ENCODE measurements at regions of chr1 and their contacts with region 1.

Region 1: DNA sequence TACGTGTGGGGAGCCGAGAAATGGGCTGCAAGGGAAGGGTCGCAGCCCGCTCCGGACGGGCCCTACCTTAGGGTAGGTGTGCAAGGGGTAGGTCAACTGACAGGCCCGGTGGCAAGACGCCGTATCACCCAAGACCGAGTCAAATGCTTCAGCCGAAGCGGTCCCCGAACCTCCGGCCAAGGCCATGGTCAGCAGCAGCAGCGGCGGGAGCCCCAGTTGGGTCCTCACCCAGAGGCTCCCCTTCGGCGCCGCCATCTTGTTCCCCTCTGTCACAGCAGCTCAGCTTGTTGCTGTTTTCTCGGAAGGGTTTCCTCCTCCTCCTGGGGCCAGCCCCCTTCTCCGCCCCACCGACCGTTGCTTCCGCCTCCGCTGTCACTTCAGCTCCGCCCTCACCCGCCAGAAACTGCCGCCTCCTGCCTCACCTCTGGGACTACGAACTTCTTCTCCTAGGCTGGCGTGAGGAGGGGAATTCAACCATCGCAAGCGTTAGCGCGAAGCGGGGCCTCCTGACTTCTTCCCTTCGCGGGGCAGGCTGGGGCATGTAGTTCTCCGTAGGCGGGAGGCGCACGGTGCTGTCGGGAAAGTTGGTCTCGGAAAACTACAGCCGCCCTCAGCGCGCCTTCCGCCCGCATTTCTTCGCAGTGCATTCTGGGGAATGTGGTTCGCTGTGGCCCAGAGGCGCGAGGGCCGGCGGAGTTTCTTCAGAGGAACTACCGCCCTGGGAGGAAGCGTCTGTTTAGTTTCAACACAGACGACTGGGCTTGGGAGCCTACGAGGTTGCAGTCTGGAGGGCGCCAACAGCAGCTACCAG is at the starts of genes TCEANC2 and TMEM59:
- DNase-seq: peak; percentile 98
- H3K4me3 Mint-ChIP-seq: no peak within 1 kb of the TSS
- H3K27ac Mint-ChIP-seq: no peak within 1 kb of the TSS
- H3K4me1 Mint-ChIP-seq: peaks cover 18% of the 10 kb centered on the region
- H3K27me3 Mint-ChIP-seq: no peaks in the 10 kb centered on the region
- total RNA-seq, gene TCEANC2: 12.8 and 13.2 TPM in 2 replicates
- total RNA-seq, gene TMEM59: 128 and 133 TPM in 2 replicates

Region 2: GRCh38 chr1:53196485-53197270 is 856.5 kb before region 1 on chr1 and contains the start of gene CPT2:
- intact Hi-C with region 1: loop called (anchors 10 kb)
- DNase-seq: peak; percentile 90
- H3K4me3 Mint-ChIP-seq: peak within 1 kb of the TSS; percentile 89
- H3K27ac Mint-ChIP-seq: peak within 1 kb of the TSS; percentile 90
- H3K4me1 Mint-ChIP-seq: peaks cover 22% of the 10 kb centered on the region
- H3K27me3 Mint-ChIP-seq: no peaks in the 10 kb centered on the region
- total RNA-seq, gene CPT2: 23.3 and 25.3 TPM in 2 replicates

Region 3: DNA sequence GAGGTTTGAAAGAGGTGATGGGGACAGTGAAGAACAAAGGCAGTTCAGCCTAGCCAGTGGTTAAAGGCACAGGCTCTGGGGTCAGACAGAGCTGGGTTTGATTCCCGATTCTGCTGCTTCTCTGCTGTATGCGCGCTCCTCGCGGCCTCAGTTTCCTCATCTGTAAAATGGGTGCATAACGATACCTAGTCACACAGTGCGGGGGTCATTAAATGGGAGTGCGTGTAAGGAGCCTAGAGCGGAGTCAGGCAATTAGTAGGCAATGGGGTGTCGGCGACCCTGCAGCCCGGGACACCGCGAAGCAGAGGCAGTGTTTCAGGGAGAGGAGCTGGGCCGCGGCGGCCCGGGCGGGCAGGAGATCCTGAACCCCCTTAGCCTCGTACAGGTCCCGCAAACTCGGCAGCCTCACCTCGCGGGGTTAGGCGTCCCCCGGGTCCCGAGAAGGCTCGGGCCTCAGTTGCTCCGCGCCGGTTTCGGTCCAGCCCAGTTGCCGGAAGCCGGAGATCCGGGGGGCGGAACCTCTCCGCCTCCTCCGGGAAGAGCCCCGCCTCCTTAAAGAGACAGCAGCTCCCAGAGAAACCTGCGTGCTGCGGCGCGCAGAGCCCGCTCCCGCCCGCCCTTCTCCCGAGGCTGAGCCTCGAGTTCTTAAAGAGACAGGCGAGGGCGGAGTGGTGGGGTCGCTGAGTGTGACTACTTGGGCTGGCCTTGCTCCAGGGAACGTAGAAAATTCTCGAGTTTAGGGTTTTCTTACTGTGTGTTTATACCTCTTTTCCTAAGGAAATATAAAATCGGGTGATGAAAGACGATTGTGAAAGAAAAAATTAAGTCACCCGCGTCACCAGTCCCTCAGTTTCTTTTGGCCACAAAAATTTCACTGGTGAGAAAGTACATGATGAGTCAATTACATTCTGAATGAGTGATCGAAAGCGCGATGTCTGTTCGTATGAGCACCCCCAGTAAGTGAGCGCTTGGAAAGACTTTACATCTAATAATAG is 163.5 kb before region 1 on chr1 and contains the start of gene YIPF1:
- intact Hi-C with region 1: loop called (anchors 2 kb)
- DNase-seq: peak; percentile 85
- H3K4me3 Mint-ChIP-seq: peak within 1 kb of the TSS; percentile 99
- H3K27ac Mint-ChIP-seq: peak within 1 kb of the TSS; percentile 95
- H3K4me1 Mint-ChIP-seq: peaks cover 19% of the 10 kb centered on the region
- H3K27me3 Mint-ChIP-seq: no peaks in the 10 kb centered on the region
- total RNA-seq, gene YIPF1: 14.8 and 15.6 TPM in 2 replicates

Region 4: DNA sequence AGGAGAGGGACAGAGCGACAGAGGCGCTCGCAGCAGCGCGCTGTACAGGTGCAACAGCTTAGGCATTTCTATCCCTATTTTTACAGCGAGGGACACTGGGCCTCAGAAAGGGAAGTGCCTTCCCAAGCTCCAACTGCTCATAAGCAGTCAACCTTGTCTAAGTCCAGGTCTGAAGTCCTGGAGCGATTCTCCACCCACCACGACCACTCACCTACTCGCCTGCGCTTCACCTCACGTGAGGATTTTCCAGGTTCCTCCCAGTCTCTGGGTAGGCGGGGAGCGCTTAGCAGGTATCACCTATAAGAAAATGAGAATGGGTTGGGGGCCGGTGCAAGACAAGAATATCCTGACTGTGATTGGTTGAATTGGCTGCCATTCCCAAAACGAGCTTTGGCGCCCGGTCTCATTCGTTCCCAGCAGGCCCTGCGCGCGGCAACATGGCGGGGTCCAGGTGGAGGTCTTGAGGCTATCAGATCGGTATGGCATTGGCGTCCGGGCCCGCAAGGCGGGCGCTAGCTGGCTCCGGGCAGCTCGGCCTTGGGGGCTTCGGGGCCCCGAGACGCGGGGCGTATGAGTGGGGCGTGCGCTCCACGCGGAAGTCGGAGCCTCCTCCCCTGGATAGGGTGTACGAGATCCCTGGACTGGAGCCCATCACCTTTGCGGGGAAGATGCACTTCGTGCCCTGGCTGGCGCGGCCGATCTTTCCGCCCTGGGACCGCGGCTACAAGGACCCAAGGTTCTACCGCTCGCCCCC is 146.8 kb after region 1 on chr1 and contains the starts of genes CYB5RL and MRPL37:
- intact Hi-C with region 1: loop called (anchors 5 kb)
- DNase-seq: peak; percentile 88
- H3K4me3 Mint-ChIP-seq: peak within 1 kb of the TSS; percentile 90
- H3K27ac Mint-ChIP-seq: peak within 1 kb of the TSS; percentile 80
- H3K4me1 Mint-ChIP-seq: peaks cover 31% of the 10 kb centered on the region
- H3K27me3 Mint-ChIP-seq: no peaks in the 10 kb centered on the region
- total RNA-seq, gene CYB5RL: 10.2 and 12.2 TPM in 2 replicates
- total RNA-seq, gene MRPL37: 130 and 134 TPM in 2 replicates

Region 5: GRCh38 chr1:54287176-54287650 is 234.1 kb after region 1 on chr1:
- intact Hi-C with region 1: loop called (anchors 10 kb)
- DNase-seq: peak; percentile 77
- H3K4me3 Mint-ChIP-seq: peak overlapping the region; percentile 74
- H3K27ac Mint-ChIP-seq: peak overlapping the region; percentile 96
- H3K4me1 Mint-ChIP-seq: peaks cover 72% of the 10 kb centered on the region
- H3K27me3 Mint-ChIP-seq: no peaks in the 10 kb centered on the region

Region 6: GRCh38 chr1:54488779-54489626 is 435.9 kb after region 1 on chr1:
- intact Hi-C with region 1: loop called (anchors 1 kb)
- DNase-seq: peak; percentile 65
- H3K4me3 Mint-ChIP-seq: peak overlapping the region; percentile 81
- H3K27ac Mint-ChIP-seq: peak overlapping the region; percentile 74
- H3K4me1 Mint-ChIP-seq: peaks cover 19% of the 10 kb centered on the region
- H3K27me3 Mint-ChIP-seq: peaks cover 36% of the 10 kb centered on the region

Region 7: DNA sequence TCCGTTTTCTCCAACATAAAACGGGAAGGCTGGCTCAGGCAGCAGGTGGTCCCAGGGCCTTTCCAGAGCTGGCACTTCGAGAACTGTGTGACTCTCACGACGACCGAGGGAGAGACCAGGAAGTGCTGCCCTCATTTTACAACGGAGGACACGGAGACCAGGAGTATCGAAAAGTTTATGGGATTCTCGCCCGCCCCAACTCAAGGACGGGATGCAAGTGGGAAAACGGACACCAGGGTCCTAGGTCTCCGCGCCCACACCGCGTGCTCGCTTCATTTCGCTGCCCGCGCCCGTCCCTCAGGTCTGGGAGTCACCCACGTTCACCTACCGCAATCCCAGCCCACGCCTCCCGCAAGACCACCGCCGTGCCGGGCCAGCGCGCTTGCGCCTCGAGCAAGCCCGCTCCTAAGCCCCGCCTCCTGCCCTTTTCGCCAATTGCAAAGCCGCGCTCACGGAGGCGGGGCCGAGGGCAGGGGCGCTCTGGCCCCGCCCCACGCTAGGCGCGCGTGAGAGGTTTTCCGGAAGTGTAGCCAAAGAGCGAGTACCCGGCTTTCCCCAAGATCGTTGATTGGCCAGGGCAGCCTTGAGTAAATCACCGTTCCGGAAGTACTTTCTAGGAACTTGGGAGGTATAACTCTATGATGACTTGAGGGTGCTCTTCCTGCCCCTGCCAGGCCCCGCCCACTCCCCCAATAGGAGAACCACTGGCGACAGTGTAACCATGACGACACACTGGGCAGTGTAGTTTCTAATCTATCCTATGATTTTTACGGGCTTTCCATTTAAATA is 711.2 kb after region 1 on chr1 and contains the start of gene PARS2:
- intact Hi-C with region 1: loop called (anchors 1 kb)
- DNase-seq: peak; percentile 94
- H3K4me3 Mint-ChIP-seq: peak within 1 kb of the TSS; percentile 88
- H3K27ac Mint-ChIP-seq: peak within 1 kb of the TSS; percentile 89
- H3K4me1 Mint-ChIP-seq: peaks cover 12% of the 10 kb centered on the region
- H3K27me3 Mint-ChIP-seq: no peaks in the 10 kb centered on the region
- total RNA-seq, gene PARS2: 6.1 and 6.4 TPM in 2 replicates